K562 (cell line): ENCODE measurements at regions of chr3 and their contacts with region 1.

Region 1: GRCh38 chr3:5520237-5520636 is 332.7 kb downstream of the EDEM1 start:
- DNase-seq: peak; percentile 71 to 83 (median 76)
- ATAC-seq: peak; percentile 100
- H3K4me3 ChIP-seq: no peak overlapping the region
- H3K27ac ChIP-seq: no peak overlapping the region
- H3K4me1 ChIP-seq: no peaks in the 10 kb centered on the region; a peak in 2 of 5 replicates
- H3K27me3 ChIP-seq: no peaks in the 10 kb centered on the region
- CTCF ChIP-seq: peak in 1 of 3 experiments; percentile 45; a peak in 2 of 6 replicates
- EP300 ChIP-seq: no peak
- POLR2A ChIP-seq: no peak
- RAD21 ChIP-seq: peak in 1 of 2 experiments; percentile 57; a peak in 3 of 4 replicates

Region 2: DNA sequence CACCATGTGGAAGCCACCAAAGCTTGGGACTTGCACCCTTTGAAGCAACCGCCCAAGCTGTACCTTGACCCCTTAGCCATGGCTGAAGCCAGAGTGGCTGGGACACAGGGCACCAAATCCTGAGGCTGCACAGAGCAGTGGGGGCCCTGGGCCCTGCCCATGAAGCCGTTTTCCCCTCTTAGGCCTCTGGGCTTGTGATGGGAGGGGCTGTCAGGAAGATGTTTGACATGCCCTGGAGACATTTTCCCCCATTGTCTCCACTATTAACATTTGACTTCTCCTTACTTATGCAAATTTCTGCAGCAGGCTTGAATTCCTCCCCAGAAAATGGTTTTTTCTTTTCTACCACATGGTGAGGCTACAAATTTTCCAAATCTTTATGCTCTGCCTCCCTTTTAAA is 189.5 kb after region 1 on chr3:
- CTCF ChIA-PET with region 1: no interaction called
- POLR2A ChIA-PET with region 1: no interaction called
- in situ Hi-C with region 1: no loop called
- intact Hi-C with region 1: loop called (anchors 5 kb)
- DNase-seq: no peak
- ATAC-seq: no peak
- H3K4me3 ChIP-seq: no peak overlapping the region
- H3K27ac ChIP-seq: no peak overlapping the region
- H3K4me1 ChIP-seq: peaks cover 0 to 10% of the 10 kb centered on the region in 2 experiments; a peak in 2 of 5 replicates
- H3K27me3 ChIP-seq: no peaks in the 10 kb centered on the region
- CTCF ChIP-seq: no peak
- EP300 ChIP-seq: no peak
- POLR2A ChIP-seq: no peak
- RAD21 ChIP-seq: no peak